Activated CD4-positive, alpha-beta T cell treated with anti-CD3 and anti-CD28 coated beads for 36 hours (primary cell): ENCODE measurements at regions of chr17 and their contacts with region 1.

Region 1: DNA sequence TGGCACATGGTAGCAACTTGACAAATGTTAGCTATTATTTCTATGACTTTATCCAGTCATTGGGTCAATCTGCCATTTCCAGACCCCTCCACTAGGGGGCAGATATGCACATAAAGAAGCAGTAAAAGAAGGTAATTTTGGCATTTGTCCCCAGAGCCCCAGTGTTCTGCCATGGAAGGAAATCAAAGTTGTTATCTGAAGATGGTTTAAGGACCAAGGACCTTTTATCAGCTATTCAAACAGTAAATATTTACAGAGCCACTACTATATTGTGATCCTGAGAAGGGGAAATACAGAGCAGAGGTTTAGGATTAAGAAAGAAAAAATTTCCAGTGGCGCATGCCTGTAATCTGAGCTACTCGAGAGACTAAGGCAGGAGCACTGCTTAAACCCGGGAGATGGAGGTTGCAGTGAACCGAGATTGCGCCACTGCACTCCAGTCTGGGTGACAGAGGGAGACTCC is 20.0 kb downstream of the TRAF4 start:
- DNase-seq: peak; percentile 87
- ATAC-seq: peak; percentile 63
- H3K4me3 Mint-ChIP-seq: no peak overlapping the region
- H3K27ac Mint-ChIP-seq: peak overlapping the region; percentile 80
- H3K4me1 Mint-ChIP-seq: peaks cover 25% of the 10 kb centered on the region
- H3K27me3 Mint-ChIP-seq: no peaks in the 10 kb centered on the region

Region 2: GRCh38 chr17:28460901-28461300 is 302.9 kb before region 1 on chr17:
- CTCF ChIA-PET with region 1: no interaction called
- POLR2A ChIA-PET with region 1: no interaction called
- intact Hi-C with region 1: no loop called
- DNase-seq: no peak
- ATAC-seq: no peak
- H3K4me3 Mint-ChIP-seq: no peak overlapping the region
- H3K27ac Mint-ChIP-seq: no peak overlapping the region
- H3K4me1 Mint-ChIP-seq: no peaks in the 10 kb centered on the region
- H3K27me3 Mint-ChIP-seq: peaks cover 6% of the 10 kb centered on the region

Region 3: GRCh38 chr17:28698253-28698941 is 65.4 kb before region 1 on chr17:
- CTCF ChIA-PET with region 1: no interaction called
- POLR2A ChIA-PET with region 1: no interaction called
- intact Hi-C with region 1: no loop called
- DNase-seq: no peak
- ATAC-seq: no peak
- H3K4me3 Mint-ChIP-seq: no peak overlapping the region
- H3K27ac Mint-ChIP-seq: peak overlapping the region; percentile 68
- H3K4me1 Mint-ChIP-seq: peaks cover 3% of the 10 kb centered on the region
- H3K27me3 Mint-ChIP-seq: no peaks in the 10 kb centered on the region

Region 4: DNA sequence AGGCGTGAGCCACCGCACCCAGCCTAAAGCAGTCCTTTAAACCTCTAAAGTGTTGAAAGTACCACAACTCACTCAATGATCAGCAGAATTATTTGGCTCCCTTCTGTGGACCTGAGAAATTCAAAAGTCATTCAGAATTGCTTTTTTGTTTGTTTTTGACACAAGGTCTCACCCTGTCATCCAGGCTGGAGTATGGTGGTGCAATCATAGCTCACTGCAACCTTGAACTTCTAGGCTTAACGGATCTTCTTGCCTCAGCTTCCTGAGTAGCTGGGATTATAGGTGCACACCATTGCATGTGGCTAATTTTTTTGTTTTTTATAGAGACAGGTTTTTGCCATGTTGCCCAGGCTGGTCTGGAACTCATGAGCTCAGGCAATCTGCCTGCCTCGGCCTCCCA is 24.3 kb after region 1 on chr17:
- CTCF ChIA-PET with region 1: interaction called, 30 read pairs
- POLR2A ChIA-PET with region 1: no interaction called
- intact Hi-C with region 1: no loop called
- DNase-seq: no peak
- ATAC-seq: no peak
- H3K4me3 Mint-ChIP-seq: no peak overlapping the region
- H3K27ac Mint-ChIP-seq: no peak overlapping the region
- H3K4me1 Mint-ChIP-seq: peaks cover 15% of the 10 kb centered on the region
- H3K27me3 Mint-ChIP-seq: no peaks in the 10 kb centered on the region

Region 5: GRCh38 chr17:28818819-28819221 is 55.0 kb after region 1 on chr17:
- CTCF ChIA-PET with region 1: interaction called, 13 read pairs
- POLR2A ChIA-PET with region 1: no interaction called
- intact Hi-C with region 1: no loop called
- DNase-seq: no peak
- ATAC-seq: no peak
- H3K4me3 Mint-ChIP-seq: no peak overlapping the region
- H3K27ac Mint-ChIP-seq: no peak overlapping the region
- H3K4me1 Mint-ChIP-seq: peaks cover 14% of the 10 kb centered on the region
- H3K27me3 Mint-ChIP-seq: no peaks in the 10 kb centered on the region

Region 6: DNA sequence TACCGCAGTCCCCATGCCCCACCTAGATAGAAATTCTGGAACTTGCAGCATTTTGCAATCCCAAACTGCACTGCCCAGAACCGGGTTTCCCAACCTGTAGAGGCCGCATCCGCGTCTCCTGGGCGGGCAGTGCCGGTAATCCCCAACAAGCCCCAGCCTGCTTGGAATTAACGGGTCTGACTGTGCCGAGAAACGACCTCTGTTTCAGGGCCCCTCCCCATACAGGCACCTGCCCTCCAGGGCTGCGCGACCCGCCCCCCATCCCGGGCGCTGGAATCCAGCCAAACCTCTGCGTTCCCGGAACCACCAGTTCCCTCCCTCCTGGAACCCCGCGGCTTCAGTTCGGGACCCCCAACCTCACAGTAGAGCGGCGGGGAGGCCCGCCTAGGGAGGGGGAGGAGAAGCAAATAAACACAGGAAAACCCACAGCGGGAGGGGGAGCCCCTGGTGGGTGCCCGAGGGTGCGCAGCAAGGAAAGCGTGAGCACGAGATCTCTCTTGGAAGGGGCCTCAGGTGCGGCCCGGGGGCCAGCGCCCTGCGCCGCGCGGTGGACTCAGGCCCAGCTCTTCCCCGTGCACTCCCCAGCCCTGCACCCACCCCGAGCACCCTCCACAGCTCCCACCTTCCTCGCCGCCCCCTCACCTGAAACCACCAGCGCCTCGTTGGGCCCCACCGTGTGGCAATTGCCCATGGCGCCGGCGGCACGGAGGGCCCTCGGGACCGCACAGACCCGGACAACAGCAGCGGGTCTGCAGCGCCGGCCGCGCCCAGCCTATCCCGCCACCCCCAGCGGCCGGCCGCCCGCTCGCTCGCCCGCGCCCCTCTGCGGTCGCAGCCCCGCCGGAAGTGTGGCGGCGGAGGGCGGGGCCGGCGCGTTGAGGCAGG is 133.3 kb after region 1 on chr17 and contains the start of gene FLOT2:
- CTCF ChIA-PET with region 1: interaction called, 13 read pairs
- POLR2A ChIA-PET with region 1: interaction called, 4 read pairs
- intact Hi-C with region 1: loop called in 1 of 2 experiments (anchors 2 kb)
- DNase-seq: peak; percentile 84
- ATAC-seq: peak; percentile 59
- H3K4me3 Mint-ChIP-seq: peak within 1 kb of the TSS; percentile 93
- H3K27ac Mint-ChIP-seq: peak within 1 kb of the TSS; percentile 93
- H3K4me1 Mint-ChIP-seq: peaks cover 73% of the 10 kb centered on the region
- H3K27me3 Mint-ChIP-seq: no peaks in the 10 kb centered on the region
- total RNA-seq, gene FLOT2: 81.3 to 88.4 TPM

Region 7: GRCh38 chr17:28916302-28916934 is 152.6 kb after region 1 on chr17:
- CTCF ChIA-PET with region 1: interaction called, 22 read pairs
- POLR2A ChIA-PET with region 1: no interaction called
- intact Hi-C with region 1: loop called in 1 of 2 experiments (anchors 1 kb)
- DNase-seq: peak; percentile 66
- ATAC-seq: peak; percentile 70
- H3K4me3 Mint-ChIP-seq: no peak overlapping the region
- H3K27ac Mint-ChIP-seq: no peak overlapping the region
- H3K4me1 Mint-ChIP-seq: peaks cover 14% of the 10 kb centered on the region
- H3K27me3 Mint-ChIP-seq: no peaks in the 10 kb centered on the region

Region 8: DNA sequence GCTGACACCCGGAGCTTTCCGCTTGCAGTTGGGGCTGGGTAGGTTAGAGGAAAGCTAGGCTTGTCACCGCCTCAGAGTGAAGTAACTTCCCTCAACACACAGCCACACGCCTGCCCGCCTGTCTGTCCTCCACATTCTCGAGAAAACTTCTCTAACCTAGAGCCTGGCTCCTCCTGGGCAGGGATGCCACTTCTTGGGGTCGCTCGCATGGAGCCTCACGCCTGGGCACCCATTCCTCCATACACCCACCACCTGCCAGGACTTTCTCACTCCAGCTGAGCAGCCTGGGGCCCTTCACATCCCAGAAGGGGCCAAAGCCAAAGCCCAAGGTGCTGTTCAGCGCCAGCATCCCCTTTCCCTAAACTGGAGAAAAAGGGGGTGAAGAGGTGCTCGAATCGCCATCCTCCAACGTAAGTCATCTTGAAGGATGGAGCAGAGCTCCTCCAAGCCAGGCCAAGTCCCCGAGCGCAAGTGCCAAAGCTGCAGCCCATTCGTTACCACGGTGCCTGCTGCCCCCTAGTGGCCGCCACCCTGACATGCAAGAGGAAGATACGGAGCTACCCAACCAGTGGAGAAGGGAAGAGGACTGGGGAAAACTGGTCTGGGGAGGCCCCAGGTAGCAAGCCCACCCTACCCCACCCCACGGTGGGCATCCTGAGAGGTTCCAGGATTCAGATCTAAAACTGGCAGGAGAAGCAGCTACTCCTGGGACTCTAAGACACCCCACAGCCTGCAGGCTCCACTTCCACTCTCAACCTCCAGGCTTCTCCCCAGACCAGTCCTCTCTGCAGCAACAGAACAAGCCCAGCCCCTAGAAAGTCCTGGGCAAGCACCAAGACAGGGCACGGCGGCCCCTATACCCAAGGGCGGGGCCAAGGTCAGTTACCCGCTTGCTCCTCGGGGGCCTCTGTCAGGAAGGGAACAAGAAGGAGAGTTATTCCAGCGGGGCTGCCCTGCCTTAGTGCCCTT is 353.3 kb after region 1 on chr17:
- CTCF ChIA-PET with region 1: interaction called, 10 read pairs
- POLR2A ChIA-PET with region 1: no interaction called
- intact Hi-C with region 1: no loop called
- DNase-seq: peak; percentile 90
- ATAC-seq: peak; percentile 88
- H3K4me3 Mint-ChIP-seq: no peak overlapping the region
- H3K27ac Mint-ChIP-seq: no peak overlapping the region
- H3K4me1 Mint-ChIP-seq: peaks cover 5% of the 10 kb centered on the region
- H3K27me3 Mint-ChIP-seq: no peaks in the 10 kb centered on the region